MCF 10A (cell line): ENCODE measurements at regions of chr10 and their contacts with region 1.

Region 1: GRCh38 chr10:63629363-63630084 is 108.3 kb downstream of the REEP3 start:
- DNase-seq: peak; percentile 98
- H3K4me3 Mint-ChIP-seq: peak overlapping the region; percentile 94
- H3K27ac Mint-ChIP-seq: peak overlapping the region; percentile 94
- H3K4me1 Mint-ChIP-seq: peaks cover 26% of the 10 kb centered on the region
- H3K27me3 Mint-ChIP-seq: no peaks in the 10 kb centered on the region
- CTCF ChIP-seq: peak; percentile 73

Region 2: GRCh38 chr10:62437696-62438095 is 1191.8 kb before region 1 on chr10:
- CTCF ChIA-PET with region 1: no interaction called
- POLR2A ChIA-PET with region 1: no interaction called
- intact Hi-C with region 1: loop called (anchors 10 kb)
- DNase-seq: peak; percentile 64
- H3K4me3 Mint-ChIP-seq: no peak overlapping the region
- H3K27ac Mint-ChIP-seq: no peak overlapping the region
- H3K4me1 Mint-ChIP-seq: peaks cover 22% of the 10 kb centered on the region
- H3K27me3 Mint-ChIP-seq: no peaks in the 10 kb centered on the region
- CTCF ChIP-seq: peak; percentile 69

Region 3: DNA sequence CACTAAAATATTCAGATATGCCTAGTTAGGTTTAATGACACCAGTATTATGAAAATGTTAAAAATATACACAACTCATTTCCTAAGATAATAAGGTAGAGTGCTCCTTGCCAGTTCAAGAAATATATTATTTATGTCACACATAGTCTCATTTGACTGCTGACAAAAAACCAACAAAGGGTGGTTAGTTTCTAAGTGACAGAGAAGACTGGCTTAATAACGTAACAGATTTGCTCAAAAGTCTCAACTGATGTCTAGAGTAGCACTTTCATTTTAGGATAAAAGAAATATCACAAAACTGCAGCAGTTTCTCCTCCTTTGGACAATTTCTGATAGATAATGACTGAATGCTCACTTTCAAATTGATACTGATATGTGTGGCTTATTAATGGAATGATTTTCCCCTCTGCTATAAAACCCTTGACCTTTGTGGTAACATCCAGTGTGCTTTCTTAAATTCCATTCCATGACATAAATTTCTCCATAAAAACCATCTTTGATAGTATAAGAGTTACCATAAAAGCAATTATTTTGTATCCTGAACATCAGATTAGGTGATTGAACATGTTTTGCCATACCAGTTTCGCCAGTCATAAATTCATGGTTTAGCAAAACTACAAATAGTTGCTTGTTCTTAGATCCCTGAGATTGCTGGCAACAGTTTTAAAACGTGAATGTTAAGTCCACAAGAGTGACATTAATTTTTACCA is 402.2 kb before region 1 on chr10:
- CTCF ChIA-PET with region 1: interaction called, 12 read pairs
- POLR2A ChIA-PET with region 1: interaction called, 3 read pairs
- intact Hi-C with region 1: no loop called
- DNase-seq: no peak
- H3K4me3 Mint-ChIP-seq: no peak overlapping the region
- H3K27ac Mint-ChIP-seq: peak overlapping the region; percentile 44
- H3K4me1 Mint-ChIP-seq: no peaks in the 10 kb centered on the region
- H3K27me3 Mint-ChIP-seq: no peaks in the 10 kb centered on the region
- CTCF ChIP-seq: no peak

Region 4: DNA sequence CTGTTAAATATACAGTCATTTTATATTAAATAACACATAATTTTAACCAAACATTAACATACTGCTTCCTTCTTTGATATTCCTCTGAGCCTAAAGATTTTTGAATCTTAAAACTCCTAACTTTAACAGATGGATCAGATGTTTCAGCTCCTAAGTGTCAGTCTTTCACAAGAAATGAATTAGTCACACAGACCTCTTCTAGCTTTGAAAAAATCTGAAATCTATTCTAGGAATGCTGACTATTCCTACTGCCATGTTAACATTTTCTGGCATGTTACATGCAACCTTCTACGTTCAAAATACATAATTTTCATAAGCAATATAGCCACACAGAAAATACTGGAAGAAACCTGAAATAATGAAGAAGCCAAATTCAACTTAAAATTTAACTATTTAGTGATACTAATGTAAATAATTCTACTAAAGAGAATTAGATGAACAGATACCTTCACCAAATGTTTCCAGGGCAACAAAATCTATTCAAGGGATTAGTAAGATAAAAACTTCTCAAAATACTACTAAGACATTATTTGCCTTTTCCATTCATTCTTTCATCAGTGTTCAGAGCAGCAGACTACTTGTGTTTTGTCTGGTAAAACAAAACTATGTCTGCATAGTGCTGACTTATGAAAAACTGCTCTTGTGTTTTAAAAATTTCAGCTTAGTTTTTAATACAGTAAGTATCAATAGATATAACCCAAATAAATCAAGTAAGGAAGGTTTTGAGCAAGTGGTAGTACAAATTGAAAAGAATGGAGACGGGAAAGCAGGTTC is 172.9 kb before region 1 on chr10:
- CTCF ChIA-PET with region 1: interaction called, 3 read pairs
- POLR2A ChIA-PET with region 1: interaction called, 10 read pairs
- intact Hi-C with region 1: no loop called
- DNase-seq: peak; percentile 52
- H3K4me3 Mint-ChIP-seq: peak overlapping the region; percentile 28
- H3K27ac Mint-ChIP-seq: peak overlapping the region; percentile 49
- H3K4me1 Mint-ChIP-seq: peaks cover 15% of the 10 kb centered on the region
- H3K27me3 Mint-ChIP-seq: no peaks in the 10 kb centered on the region
- CTCF ChIP-seq: no peak

Region 5: DNA sequence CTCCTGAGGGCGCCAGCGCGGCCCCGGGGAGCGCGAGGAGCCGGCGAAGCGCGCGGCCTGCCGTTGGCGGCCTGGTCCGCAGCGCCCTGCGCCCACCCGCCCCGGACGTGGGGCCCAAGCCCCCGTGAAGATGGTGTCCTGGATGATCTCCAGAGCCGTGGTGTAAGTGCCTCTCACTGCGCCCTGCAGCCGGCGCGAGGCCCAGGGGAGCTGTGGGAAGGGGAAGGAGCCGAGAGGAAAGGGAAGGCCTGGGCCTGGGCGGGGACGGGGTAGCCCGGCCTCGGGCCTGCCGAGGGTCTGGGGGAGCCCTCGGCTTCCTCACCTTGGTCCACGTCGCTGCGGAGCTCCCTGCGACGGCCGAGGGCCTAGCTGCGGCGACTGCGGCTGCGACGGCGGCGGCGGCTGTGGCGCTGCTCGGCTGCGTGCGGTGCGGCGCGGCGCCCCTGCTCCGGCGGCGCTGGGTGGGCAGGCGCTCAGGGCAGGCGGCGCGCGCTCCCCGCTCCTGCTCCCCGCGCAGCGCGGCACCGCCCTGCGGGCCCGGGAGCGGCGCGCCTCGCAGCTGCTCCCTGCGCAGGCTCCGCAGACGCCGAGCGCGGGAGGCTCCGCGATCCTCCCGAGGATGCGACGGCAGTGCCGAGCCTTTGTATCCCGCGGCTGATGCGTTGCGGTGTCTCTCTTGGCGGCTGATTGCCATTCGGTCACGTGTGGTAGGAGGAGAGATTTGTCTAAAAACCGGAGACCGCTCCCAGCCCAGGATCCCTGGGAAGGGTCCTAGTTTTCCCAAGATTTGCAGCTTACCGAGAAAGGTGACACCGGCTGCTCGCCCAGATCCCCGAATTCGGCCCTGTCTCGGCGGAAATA is 107.9 kb before region 1 on chr10:
- CTCF ChIA-PET with region 1: interaction called, 13 read pairs
- POLR2A ChIA-PET with region 1: interaction called, 99 read pairs
- intact Hi-C with region 1: loop called (anchors 1 kb)
- DNase-seq: peak; percentile 65
- H3K4me3 Mint-ChIP-seq: peak overlapping the region; percentile 86
- H3K27ac Mint-ChIP-seq: peak overlapping the region; percentile 83
- H3K4me1 Mint-ChIP-seq: peaks cover 46% of the 10 kb centered on the region
- H3K27me3 Mint-ChIP-seq: no peaks in the 10 kb centered on the region
- CTCF ChIP-seq: no peak

Region 6: DNA sequence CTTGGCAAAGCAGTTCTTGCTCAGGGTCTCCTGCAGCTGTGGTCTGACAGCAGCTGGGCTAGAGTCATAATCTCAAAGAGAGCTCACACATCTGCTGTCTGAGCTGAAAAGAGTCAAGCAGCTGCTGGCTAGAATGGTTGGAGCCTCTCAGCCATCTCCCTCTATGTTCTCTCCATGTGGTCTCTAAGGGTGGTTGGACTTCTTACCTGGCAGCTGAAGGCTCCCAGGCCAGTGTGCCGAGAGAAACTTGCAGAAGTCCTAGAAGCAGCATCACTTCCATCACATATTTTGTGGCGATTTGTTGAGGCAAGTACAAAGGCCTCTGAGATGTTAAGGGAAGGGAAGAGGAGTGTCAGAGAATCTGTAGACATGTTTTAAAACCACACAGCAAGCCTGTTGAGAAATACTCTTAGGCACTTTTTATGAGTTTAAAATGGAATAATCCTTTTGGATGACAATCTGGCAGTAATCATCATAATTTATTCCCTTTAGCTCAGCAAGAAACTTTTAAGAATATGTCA is 15.1 kb before region 1 on chr10:
- CTCF ChIA-PET with region 1: interaction called, 10 read pairs
- POLR2A ChIA-PET with region 1: interaction called, 12 read pairs
- intact Hi-C with region 1: no loop called
- DNase-seq: no peak
- H3K4me3 Mint-ChIP-seq: no peak overlapping the region
- H3K27ac Mint-ChIP-seq: peak overlapping the region; percentile 47
- H3K4me1 Mint-ChIP-seq: peaks cover 6% of the 10 kb centered on the region
- H3K27me3 Mint-ChIP-seq: no peaks in the 10 kb centered on the region
- CTCF ChIP-seq: no peak

Region 7: DNA sequence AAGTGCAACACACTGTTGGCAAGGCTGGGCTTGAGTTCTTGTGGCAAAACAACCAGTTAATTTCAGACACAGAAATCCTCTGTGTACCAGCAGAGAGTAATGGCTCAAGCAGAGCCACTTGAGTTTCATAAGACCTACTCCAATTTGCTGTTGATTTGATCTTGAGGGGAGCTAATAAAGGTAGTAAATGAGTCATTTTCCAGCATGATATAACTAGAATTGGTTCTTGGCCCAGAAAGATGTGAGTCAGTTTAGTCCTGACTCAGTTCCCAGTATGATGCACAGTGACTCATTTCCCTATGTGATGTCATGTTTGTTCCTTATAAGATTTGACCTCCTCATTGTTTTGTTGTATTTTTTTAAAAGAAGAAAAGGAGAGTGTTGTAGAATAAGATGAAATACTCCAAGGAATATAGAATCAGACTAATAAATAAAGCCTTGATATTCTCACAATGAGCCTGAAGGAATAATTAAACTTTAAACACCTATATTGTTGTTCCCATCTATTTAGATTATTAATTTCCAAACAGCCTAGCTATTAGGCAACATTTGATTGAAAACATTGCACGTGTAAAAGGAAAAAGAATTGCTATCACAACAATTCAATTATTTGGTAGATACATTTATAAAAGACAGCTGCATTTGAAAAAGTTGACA is 77.9 kb after region 1 on chr10:
- CTCF ChIA-PET with region 1: interaction called, 9 read pairs
- POLR2A ChIA-PET with region 1: interaction called, 50 read pairs
- intact Hi-C with region 1: loop called (anchors 2 kb)
- DNase-seq: peak; percentile 98
- H3K4me3 Mint-ChIP-seq: no peak overlapping the region
- H3K27ac Mint-ChIP-seq: peak overlapping the region; percentile 61
- H3K4me1 Mint-ChIP-seq: peaks cover 42% of the 10 kb centered on the region
- H3K27me3 Mint-ChIP-seq: no peaks in the 10 kb centered on the region
- CTCF ChIP-seq: no peak

Region 8: DNA sequence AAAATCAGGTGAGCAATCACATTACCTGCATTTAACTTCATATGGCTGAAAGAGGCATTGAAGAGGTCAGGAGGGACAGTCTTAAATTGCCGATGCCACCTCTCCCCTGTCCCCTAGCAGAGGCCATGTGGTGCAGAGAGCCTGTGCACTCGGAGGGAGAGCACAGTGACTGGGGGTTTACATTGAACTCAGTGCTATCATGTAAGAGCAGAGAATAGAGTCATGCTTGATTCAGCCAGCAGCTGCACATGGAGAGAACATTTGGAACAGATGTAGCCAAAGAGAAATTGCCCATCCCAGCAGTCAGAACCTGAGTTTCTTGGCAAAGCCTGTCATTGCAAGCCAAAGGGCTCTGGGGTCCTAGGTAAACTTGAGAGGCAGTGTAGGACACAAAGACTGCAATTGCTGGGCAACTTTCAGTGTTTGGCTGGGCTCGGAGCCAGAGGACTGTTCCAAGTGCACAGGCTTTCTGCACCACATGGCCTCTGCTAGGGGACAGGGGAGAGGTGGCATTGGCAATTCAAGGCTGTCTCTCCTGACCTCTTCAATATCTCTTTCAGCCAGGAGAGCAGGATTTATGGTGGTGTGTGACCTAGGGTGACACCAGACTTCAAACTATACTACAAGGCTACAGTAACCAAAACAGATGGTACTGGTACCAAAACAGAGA is 158.8 kb after region 1 on chr10:
- CTCF ChIA-PET with region 1: no interaction called
- POLR2A ChIA-PET with region 1: no interaction called
- intact Hi-C with region 1: no loop called
- DNase-seq: no peak
- H3K4me3 Mint-ChIP-seq: no peak overlapping the region
- H3K27ac Mint-ChIP-seq: no peak overlapping the region
- H3K4me1 Mint-ChIP-seq: no peaks in the 10 kb centered on the region
- H3K27me3 Mint-ChIP-seq: peaks cover 17% of the 10 kb centered on the region
- CTCF ChIP-seq: no peak